ENCODE measurements at regions of chr12 and their contacts with region 1.

Region 1: DNA sequence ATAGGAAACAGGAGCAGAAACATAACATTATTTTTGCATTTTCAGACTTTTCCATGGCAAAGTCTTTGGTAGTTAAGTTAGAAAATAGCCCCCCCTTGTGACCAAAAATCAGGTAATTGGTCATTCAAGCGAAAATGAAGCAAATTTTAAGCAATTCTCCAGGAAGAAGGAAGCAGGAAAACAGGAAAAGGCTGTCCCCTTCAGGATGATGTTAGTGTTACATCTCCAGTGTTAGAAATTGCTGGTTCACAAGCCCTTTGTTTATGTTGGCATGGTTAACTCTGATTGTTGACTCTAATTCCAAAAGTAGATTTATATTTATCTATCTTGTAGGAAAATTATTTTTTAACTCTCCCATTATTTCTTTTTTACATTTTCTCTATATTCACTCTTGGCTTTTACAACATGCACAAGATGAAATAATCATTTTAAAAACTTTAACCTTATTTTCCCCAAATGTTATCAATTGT is 18.8 kb upstream of the GAS2L3 start:
- DNase-seq: peak; percentile 25 to 69
- H3K4me3 ChIP-seq: no peak overlapping the region
- H3K27ac ChIP-seq: no peak overlapping the region
- H3K4me1 ChIP-seq: no peaks in the 10 kb centered on the region
- H3K27me3 ChIP-seq: peaks cover 13% of the 10 kb centered on the region; the same call in 1 of the 2 replicates
- CTCF ChIP-seq: peak; percentile 75

Region 2: DNA sequence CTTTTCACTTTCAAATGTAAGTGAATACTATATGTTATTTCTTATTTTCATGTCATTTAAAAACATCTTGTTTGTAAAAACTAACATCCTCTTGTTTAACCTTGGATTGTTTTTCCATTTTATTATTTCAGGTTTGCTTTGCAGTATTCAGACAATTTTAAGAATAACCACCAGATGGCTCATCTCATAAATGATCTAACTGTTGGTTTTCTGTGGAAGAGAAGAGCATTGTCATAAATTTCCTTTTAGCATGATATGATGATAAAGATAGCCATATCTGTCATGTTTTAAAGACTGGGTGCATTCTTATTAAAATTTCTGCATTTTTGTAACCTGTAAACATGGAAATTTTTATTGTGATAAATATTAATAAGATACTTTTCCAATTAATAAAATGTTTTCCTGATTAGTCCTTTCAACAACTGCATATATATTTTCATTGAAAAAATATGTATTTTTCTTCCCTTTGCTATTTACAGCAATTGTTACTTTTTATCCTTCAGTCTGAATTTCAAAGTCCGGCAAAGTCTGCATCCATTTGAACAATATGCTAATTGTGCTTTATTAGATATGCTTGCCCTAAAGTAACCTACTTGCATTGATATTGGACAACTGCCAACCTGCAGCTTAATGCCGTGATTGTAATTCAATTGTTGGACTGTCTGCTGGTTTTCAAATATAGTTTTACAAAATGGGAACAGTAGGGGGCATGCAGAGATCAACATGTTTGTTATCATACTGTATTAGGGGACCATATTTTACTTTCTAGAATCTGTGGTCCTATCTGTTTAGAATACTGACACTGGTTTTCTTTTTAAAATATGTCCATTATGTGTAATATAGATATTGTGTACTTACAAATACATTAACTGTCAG is 743.7 kb before region 1 on chr12:
- CTCF ChIA-PET with region 1: no interaction called
- POLR2A ChIA-PET with region 1: no interaction called
- intact Hi-C with region 1: loop called (anchors 10 kb)
- DNase-seq: no peak
- H3K4me3 ChIP-seq: no peak overlapping the region
- H3K27ac ChIP-seq: no peak overlapping the region
- H3K4me1 ChIP-seq: no peaks in the 10 kb centered on the region
- H3K27me3 ChIP-seq: peaks cover 28% of the 10 kb centered on the region
- CTCF ChIP-seq: peak; percentile 48; the same call in 1 of the 2 replicates

Region 3: DNA sequence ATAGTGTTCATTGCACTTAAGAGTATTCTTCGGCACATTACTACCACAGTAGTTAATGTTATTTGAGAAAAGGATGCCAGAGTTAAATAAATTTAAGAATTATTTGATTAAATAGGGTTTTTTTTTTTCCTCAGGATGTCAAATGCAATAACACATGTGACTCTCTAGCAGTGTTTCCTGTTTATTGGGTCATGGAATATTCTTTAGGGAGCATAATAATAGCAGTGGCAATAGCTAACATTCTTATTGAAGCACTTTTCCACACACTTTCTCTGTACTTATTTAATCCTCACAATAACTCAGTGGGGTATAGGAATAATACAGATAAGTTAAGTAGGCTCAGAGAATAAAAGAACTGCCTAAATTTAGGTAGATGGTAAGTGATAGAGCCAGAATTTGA is 243.3 kb before region 1 on chr12:
- CTCF ChIA-PET with region 1: no interaction called
- POLR2A ChIA-PET with region 1: no interaction called
- intact Hi-C with region 1: no loop called
- DNase-seq: no peak
- H3K4me3 ChIP-seq: no peak overlapping the region
- H3K27ac ChIP-seq: no peak overlapping the region
- H3K4me1 ChIP-seq: no peaks in the 10 kb centered on the region
- H3K27me3 ChIP-seq: no peaks in the 10 kb centered on the region
- CTCF ChIP-seq: no peak

Region 4: DNA sequence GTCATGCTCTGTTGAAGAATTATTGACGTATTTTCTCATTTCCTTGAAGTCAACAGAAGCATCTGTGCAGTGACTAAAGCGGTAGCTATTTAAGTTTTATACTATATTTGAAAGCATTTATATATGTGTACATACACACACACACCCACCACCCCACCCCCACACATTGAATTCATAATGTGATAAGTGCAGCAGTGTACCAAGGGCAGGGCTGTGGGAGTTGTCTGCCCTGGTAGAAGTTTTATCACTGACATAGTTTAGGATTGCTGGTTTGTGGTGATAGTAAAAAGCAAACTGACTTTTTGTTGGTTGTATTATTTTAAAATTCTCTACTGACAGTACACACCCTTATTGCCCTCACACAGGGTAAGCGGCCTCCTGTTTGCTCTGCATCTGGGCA is 58.0 kb after region 1 on chr12:
- CTCF ChIA-PET with region 1: no interaction called
- POLR2A ChIA-PET with region 1: no interaction called
- intact Hi-C with region 1: no loop called
- DNase-seq: no peak
- H3K4me3 ChIP-seq: no peak overlapping the region
- H3K27ac ChIP-seq: no peak overlapping the region
- H3K4me1 ChIP-seq: no peaks in the 10 kb centered on the region
- H3K27me3 ChIP-seq: no peaks in the 10 kb centered on the region
- CTCF ChIP-seq: no peak

Measured in PC-9 (cell line).